Activated T-helper 1 cell treated with anti-CD3 and anti-CD28 coated beads, Interleukin-12 subunit alpha, Interleukin-12 subunit beta, Interleukin-2, Interleukin-4 antibody, amounts not matched to agents 30 ng/mL and 10 ng/mL and 1 ng/mL, durations not matched to agents 14 hours and 24 hours and 36 hours (primary cell): ENCODE measurements at regions of chr19 and their contacts with region 1.

Region 1: GRCh38 chr19:16628183-16628983 is at the start of gene MED26:
- DNase-seq: peak; percentile 91
- H3K4me3 Mint-ChIP-seq: peak within 1 kb of the TSS; percentile 97
- H3K27ac Mint-ChIP-seq: peak within 1 kb of the TSS; percentile 99
- H3K4me1 Mint-ChIP-seq: peaks cover 47% of the 10 kb centered on the region
- H3K27me3 Mint-ChIP-seq: no peaks in the 10 kb centered on the region
- total RNA-seq, gene MED26: 14.0 and 14.9 TPM in 2 replicates

Region 2: GRCh38 chr19:16495982-16496612 is 132.3 kb before region 1 on chr19 and contains the starts of genes C19orf44 and CALR3:
- intact Hi-C with region 1: loop called (anchors 1 kb)
- DNase-seq: peak; percentile 98
- H3K4me3 Mint-ChIP-seq: peak within 1 kb of the TSS; percentile 93
- H3K27ac Mint-ChIP-seq: peak within 1 kb of the TSS; percentile 87
- H3K4me1 Mint-ChIP-seq: peaks cover 9% of the 10 kb centered on the region
- H3K27me3 Mint-ChIP-seq: no peaks in the 10 kb centered on the region
- total RNA-seq, gene C19orf44: 4.4 and 5.6 TPM in 2 replicates
- total RNA-seq, gene CALR3: not detected in 2 replicates

Region 3: DNA sequence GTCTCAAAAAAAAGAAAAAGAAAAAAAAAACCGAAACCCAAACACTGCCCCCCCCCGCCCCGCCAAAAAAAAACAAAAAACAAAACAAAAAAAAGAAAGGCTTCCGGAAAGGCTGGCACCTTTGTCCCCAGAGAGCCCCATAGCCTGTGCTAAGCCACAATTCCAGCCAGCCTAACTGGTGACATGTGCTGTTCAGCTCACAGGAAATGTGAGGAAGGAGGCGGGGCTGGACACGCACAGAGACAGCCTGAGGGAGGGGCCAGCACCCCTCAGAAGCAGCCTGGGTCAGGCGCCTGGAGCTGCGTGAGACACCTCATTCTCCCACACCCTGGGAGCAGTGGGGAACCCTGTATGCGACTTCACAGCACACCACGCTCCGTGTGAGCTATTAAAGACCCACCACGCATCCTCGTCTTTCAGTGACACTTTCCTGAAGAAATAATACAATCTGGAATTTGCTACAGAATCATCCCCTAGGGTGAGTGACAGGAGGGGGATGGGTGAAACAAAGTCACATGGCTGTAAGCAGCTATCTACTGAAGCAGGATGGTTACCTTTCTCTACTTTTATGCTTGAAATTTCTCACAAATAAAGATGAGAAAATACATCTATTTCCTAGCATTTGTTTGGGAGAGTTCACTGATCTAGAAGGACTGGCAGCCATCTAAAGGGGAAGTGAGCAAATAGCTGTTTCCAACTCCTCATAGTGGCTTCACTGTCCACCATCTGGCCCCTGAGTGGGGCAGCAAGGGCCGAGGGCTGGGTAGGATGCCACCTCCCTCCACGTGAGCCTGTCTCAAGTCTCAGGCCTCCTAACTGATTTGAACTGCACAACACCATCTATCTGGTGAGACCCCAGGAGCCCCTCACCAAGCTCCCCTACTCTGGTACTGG is 43.9 kb before region 1 on chr19:
- intact Hi-C with region 1: loop called (anchors 1 kb)
- DNase-seq: peak; percentile 88
- H3K4me3 Mint-ChIP-seq: peak overlapping the region; percentile 87
- H3K27ac Mint-ChIP-seq: peak overlapping the region; percentile 90
- H3K4me1 Mint-ChIP-seq: peaks cover 73% of the 10 kb centered on the region
- H3K27me3 Mint-ChIP-seq: no peaks in the 10 kb centered on the region

Region 4: GRCh38 chr19:16659831-16660708 is 31.7 kb after region 1 on chr19 and contains the start of gene SMIM7:
- intact Hi-C with region 1: loop called (anchors 1 kb)
- DNase-seq: peak; percentile 98
- H3K4me3 Mint-ChIP-seq: peak within 1 kb of the TSS; percentile 94
- H3K27ac Mint-ChIP-seq: peak within 1 kb of the TSS; percentile 97
- H3K4me1 Mint-ChIP-seq: peaks cover 27% of the 10 kb centered on the region
- H3K27me3 Mint-ChIP-seq: peaks cover 13% of the 10 kb centered on the region
- total RNA-seq, gene SMIM7: 69.3 and 72.7 TPM in 2 replicates

Region 5: DNA sequence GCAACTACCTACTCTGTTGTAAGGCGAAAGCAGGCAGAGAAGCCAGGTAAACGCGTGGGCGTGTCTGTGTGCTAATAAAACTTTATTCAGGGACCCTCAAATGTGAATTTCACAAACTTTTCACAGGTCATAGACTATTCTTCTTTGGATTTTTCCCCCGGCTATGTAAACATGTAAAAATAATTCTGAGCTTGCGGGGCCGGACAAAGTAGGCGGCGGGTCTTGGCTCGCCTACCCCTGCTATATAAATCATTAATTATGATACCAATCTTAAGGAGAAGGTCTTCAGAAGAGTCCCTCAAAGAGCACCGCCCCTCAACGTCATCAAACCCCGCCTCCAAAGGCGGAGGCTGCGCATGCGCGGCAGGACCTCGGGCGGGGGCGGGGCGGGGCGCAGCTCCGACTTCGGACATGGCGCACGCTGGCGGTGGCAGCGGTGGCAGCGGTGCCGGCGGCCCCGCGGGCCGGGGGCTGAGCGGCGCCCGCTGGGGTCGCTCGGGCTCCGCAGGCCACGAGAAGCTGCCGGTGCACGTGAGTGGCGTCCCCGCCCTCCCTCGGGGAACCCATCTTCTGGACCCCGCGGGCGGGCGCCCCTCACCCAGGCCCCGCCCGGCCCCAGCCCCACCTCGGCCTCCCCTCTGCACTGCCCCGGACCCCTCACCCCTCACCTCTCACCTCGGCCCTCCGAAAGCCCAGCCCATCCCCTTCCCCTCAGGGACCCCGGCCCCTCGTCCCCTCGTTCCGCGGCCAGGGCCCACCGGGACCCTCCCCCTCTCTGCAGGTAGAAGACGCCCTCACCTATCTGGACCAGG is 200.8 kb after region 1 on chr19 and contains the start of gene SIN3B:
- intact Hi-C with region 1: no loop called
- DNase-seq: peak; percentile 88
- H3K4me3 Mint-ChIP-seq: peak within 1 kb of the TSS; percentile 88
- H3K27ac Mint-ChIP-seq: peak within 1 kb of the TSS; percentile 78
- H3K4me1 Mint-ChIP-seq: peaks cover 37% of the 10 kb centered on the region
- H3K27me3 Mint-ChIP-seq: peaks cover 26% of the 10 kb centered on the region
- total RNA-seq, gene SIN3B: 44.6 and 45.1 TPM in 2 replicates